ENCODE measurements at regions of chr12 and their contacts with region 1.

Region 1: DNA sequence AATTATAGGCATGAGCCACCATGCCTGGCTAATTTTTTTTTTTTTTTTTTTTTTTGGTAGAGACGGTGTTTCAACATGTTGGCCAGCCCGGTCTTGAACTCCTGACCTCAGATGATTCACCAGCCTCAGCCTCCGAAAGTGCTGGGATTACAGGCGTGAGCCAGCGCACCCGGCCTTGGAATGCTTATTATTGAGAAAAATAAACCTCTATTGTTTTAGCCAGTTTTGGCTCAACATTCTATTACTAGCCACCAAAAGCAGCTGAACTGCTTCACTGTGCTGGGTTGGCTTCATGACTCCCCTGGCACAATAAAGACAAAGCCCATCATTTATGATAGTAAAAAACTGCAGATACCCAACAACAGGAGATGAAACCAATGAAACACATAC is 93.5 kb upstream of the CEP83 start:
- DNase-seq: peak; percentile 81
- H3K4me3 Mint-ChIP-seq: no peak overlapping the region
- H3K27ac Mint-ChIP-seq: peak overlapping the region; percentile 75
- H3K4me1 Mint-ChIP-seq: peaks cover 46% of the 10 kb centered on the region
- H3K27me3 Mint-ChIP-seq: no peaks in the 10 kb centered on the region
- CTCF ChIP-seq: no peak

Region 2: GRCh38 chr12:94418517-94418916 is 134.6 kb before region 1 on chr12:
- CTCF ChIA-PET with region 1: no interaction called
- intact Hi-C with region 1: no loop called
- DNase-seq: no peak
- H3K4me3 Mint-ChIP-seq: no peak overlapping the region
- H3K27ac Mint-ChIP-seq: no peak overlapping the region
- H3K4me1 Mint-ChIP-seq: peaks cover 6% of the 10 kb centered on the region
- H3K27me3 Mint-ChIP-seq: no peaks in the 10 kb centered on the region
- CTCF ChIP-seq: no peak

Region 3: GRCh38 chr12:94593822-94594442 is 40.8 kb after region 1 on chr12:
- CTCF ChIA-PET with region 1: no interaction called
- intact Hi-C with region 1: loop called (anchors 5 kb)
- DNase-seq: no peak
- H3K4me3 Mint-ChIP-seq: no peak overlapping the region
- H3K27ac Mint-ChIP-seq: peak overlapping the region; percentile 7
- H3K4me1 Mint-ChIP-seq: peaks cover 26% of the 10 kb centered on the region
- H3K27me3 Mint-ChIP-seq: no peaks in the 10 kb centered on the region
- CTCF ChIP-seq: no peak